Activated CD4-positive, alpha-beta memory T cell treated with anti-CD3 and anti-CD28 coated beads for 36 hours (primary cell): ENCODE measurements at regions of chr2 and their contacts with region 1.

Region 1: GRCh38 chr2:157336137-157337010 is 10.8 kb upstream of the ERMN start:
- DNase-seq: peak; percentile 43
- H3K4me3 Mint-ChIP-seq: peak overlapping the region; percentile 52
- H3K27ac Mint-ChIP-seq: peak overlapping the region; percentile 40
- H3K4me1 Mint-ChIP-seq: peaks cover 55% of the 10 kb centered on the region
- H3K27me3 Mint-ChIP-seq: no peaks in the 10 kb centered on the region

Region 2: GRCh38 chr2:157261199-157261783 is 75.1 kb before region 1 on chr2:
- CTCF ChIA-PET with region 1: no interaction called
- POLR2A ChIA-PET with region 1: no interaction called
- intact Hi-C with region 1: loop called (anchors 1 kb)
- DNase-seq: peak; percentile 81
- H3K4me3 Mint-ChIP-seq: no peak overlapping the region
- H3K27ac Mint-ChIP-seq: peak overlapping the region; percentile 18
- H3K4me1 Mint-ChIP-seq: peaks cover 19% of the 10 kb centered on the region
- H3K27me3 Mint-ChIP-seq: peaks cover 5% of the 10 kb centered on the region

Region 3: GRCh38 chr2:157320409-157320808 is 16.0 kb before region 1 on chr2:
- CTCF ChIA-PET with region 1: interaction called, 81 read pairs
- POLR2A ChIA-PET with region 1: no interaction called
- intact Hi-C with region 1: no loop called
- DNase-seq: no peak
- H3K4me3 Mint-ChIP-seq: no peak overlapping the region
- H3K27ac Mint-ChIP-seq: no peak overlapping the region
- H3K4me1 Mint-ChIP-seq: peaks cover 6% of the 10 kb centered on the region
- H3K27me3 Mint-ChIP-seq: no peaks in the 10 kb centered on the region

Region 4: DNA sequence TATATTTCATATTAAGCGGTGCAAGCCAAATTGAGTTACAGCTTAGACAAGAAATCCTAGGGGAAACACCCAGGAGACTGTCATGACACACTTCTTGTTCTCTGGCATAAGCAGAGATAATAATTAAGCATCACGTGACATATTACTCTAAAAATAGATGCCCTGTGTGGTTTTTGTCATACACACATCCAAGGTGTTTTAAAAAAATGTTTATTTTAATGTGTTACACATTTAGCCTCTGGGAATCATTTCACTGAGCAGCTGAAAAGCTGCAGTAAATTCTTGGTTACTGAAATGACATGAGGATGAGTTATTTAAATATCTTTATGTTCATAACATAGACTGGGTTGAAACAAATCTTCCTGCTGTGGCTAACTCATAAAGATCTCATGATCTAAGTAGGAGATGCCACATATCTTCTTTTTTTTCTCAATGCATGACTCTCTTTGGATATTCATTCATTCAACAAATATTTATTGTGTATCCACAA is 27.3 kb after region 1 on chr2:
- CTCF ChIA-PET with region 1: interaction called, 14 read pairs
- POLR2A ChIA-PET with region 1: no interaction called
- intact Hi-C with region 1: loop called (anchors 2 kb)
- DNase-seq: no peak
- H3K4me3 Mint-ChIP-seq: no peak overlapping the region
- H3K27ac Mint-ChIP-seq: peak overlapping the region; percentile 23
- H3K4me1 Mint-ChIP-seq: peaks cover 24% of the 10 kb centered on the region
- H3K27me3 Mint-ChIP-seq: no peaks in the 10 kb centered on the region

Region 5: DNA sequence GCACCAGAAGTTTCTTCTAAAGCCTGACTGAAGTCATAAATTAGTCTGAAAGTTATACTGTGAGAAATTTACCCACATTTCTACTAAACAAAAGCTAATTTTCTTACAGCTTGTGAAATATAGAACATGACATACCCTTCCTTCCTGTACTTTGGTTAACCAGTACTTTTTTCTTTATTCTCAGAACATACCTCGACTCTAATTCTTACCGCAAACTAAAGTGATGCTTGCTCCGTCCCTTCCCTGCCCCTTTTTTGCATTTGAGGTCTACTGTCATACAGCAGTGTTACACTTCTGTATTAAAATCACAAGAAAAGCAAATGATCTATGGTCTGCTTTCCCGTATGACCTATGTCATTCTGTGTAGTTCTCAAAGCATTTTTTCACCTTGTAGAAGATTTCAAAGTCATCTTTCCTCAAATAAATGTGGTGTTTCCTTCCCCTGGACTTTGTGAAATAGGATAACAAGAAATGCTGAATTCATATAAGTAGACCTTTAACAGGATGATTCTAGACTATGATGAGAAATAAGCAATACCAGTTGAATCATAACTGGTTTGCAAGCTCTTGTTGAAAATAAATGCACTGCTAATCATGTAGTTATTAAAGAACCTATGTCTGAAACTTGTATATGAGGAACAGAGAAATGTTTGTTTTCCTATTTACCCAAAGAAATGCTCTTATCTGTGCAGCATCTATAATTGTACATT is 77.1 kb after region 1 on chr2:
- CTCF ChIA-PET with region 1: interaction called, 39 read pairs
- POLR2A ChIA-PET with region 1: interaction called, 7 read pairs
- intact Hi-C with region 1: no loop called
- DNase-seq: peak; percentile 75
- H3K4me3 Mint-ChIP-seq: peak overlapping the region; percentile 65
- H3K27ac Mint-ChIP-seq: peak overlapping the region; percentile 98
- H3K4me1 Mint-ChIP-seq: peaks cover 81% of the 10 kb centered on the region
- H3K27me3 Mint-ChIP-seq: peaks cover 2% of the 10 kb centered on the region

Region 6: DNA sequence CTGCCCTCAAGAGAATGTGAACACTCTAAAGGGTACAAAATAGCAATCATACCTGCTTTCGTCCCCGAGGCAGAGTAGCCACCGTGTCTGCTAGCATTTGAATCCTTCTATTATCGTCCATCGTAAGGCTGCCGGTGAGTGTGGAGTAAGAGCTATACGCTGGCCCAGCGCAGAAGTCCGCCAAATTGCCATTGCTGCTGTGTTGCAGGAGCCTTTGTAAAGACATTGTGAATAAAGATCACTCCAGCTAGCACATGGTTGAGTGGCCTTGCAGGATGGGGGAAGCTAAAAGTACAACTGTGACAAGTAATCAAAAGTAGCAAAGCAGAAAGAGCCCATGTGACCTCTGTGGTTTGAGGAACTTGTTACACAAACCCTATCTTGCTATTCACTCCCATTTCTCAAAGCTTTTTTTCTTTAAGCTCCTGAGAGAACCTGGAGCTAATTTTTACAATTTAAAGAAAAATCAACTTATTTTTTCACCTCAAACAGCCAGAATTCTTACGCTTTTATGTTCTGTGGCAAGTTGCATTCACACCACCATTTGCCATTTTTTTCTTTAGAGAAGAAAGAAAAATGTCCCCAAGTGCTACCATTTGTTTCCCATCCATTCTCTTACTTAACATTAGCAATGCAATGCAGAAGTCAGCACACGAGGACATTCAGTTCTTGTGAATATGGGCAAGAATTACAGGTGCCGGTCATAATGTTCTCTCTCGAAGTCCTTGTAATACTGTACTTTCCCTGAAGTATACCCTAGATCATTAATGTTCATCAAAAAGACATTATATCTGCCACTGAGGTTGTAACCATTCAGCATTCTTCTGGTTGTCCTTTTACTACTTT is 107.6 kb after region 1 on chr2 and contains the start of gene CYTIP:
- CTCF ChIA-PET with region 1: interaction called, 29 read pairs
- POLR2A ChIA-PET with region 1: interaction called, 6 read pairs
- intact Hi-C with region 1: no loop called
- DNase-seq: peak; percentile 82
- H3K4me3 Mint-ChIP-seq: peak within 1 kb of the TSS; percentile 92
- H3K27ac Mint-ChIP-seq: peak within 1 kb of the TSS; percentile 99
- H3K4me1 Mint-ChIP-seq: peaks cover 37% of the 10 kb centered on the region
- H3K27me3 Mint-ChIP-seq: peaks cover 2% of the 10 kb centered on the region
- total RNA-seq, gene CYTIP: 369 to 388 TPM

Region 7: DNA sequence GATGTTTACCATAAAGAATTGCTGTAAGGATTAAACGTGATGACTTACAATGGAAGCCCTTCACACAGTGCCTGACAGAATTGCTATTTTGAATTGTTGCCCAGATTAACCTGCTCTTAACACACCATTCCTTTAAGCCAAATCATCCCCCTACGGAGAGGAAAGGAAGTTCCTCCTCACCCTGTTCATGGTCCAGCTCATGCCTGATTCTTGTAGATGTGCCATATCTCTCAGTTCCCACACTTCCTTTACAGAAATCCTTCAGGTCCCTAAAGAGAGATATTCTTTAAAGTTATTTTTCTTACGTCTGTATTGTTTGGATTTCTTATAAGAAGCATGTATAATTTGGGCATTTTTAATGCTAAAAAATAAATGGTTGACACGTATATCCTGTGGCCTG is 1331.2 kb after region 1 on chr2:
- CTCF ChIA-PET with region 1: no interaction called
- POLR2A ChIA-PET with region 1: no interaction called
- intact Hi-C with region 1: no loop called
- DNase-seq: no peak
- H3K4me3 Mint-ChIP-seq: no peak overlapping the region
- H3K27ac Mint-ChIP-seq: no peak overlapping the region
- H3K4me1 Mint-ChIP-seq: no peaks in the 10 kb centered on the region
- H3K27me3 Mint-ChIP-seq: no peaks in the 10 kb centered on the region